Activated naive CD4-positive, alpha-beta T cell treated with anti-CD3 and anti-CD28 coated beads for 36 hours (primary cell): ENCODE measurements at regions of chr1 and their contacts with region 1.

Region 1: DNA sequence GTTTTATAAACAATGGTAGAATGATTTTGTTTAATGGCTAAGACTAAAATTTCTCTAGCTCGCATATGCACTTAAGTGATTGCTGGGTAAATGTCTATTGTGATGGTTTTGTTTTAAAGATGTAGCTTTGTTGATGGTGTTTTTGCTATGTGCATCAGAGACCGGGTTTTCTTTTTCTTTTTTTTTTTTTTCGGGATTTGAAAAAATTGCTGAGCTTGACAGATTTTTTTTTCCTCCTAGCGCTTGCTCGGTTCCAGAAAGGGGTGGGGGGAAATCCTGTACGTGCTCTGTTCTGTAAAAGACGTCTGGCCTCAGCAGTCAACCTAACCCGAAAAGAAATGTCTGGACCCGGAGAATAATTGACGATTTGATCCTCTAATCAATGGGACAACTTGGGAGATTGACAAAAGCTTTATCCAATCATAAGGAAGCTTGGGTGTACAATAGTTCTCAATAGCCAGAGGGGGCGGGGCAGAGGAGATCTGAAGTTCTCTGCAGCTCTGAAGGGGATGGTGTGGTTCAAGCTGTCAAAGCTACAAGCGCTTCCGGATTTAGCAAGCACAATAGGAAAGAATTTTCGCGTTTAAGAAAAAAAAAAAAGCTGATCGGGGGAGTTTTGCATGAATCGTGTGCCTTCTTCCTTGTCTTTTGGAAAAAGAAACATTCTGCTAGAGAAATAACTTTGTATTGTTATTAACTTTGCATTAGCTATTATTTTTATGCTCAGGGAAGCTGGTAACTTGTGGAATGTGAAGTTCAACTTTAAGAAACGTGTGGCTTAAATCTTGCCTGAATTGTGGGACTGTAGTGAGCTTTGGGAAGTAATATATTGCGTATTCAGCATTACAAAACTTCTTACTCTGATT is 4.5 kb upstream of the NFIA start:
- DNase-seq: peak; percentile 96
- H3K4me3 Mint-ChIP-seq: peak overlapping the region; percentile 92
- H3K27ac Mint-ChIP-seq: peak overlapping the region; percentile 75
- H3K4me1 Mint-ChIP-seq: peaks cover 43% of the 10 kb centered on the region
- H3K27me3 Mint-ChIP-seq: peaks cover 9% of the 10 kb centered on the region

Region 2: GRCh38 chr1:60978421-60979357 is 99.2 kb before region 1 on chr1:
- CTCF ChIA-PET with region 1: no interaction called
- intact Hi-C with region 1: no loop called
- DNase-seq: peak; percentile 57
- H3K4me3 Mint-ChIP-seq: no peak overlapping the region
- H3K27ac Mint-ChIP-seq: no peak overlapping the region
- H3K4me1 Mint-ChIP-seq: peaks cover 2% of the 10 kb centered on the region
- H3K27me3 Mint-ChIP-seq: no peaks in the 10 kb centered on the region

Region 3: DNA sequence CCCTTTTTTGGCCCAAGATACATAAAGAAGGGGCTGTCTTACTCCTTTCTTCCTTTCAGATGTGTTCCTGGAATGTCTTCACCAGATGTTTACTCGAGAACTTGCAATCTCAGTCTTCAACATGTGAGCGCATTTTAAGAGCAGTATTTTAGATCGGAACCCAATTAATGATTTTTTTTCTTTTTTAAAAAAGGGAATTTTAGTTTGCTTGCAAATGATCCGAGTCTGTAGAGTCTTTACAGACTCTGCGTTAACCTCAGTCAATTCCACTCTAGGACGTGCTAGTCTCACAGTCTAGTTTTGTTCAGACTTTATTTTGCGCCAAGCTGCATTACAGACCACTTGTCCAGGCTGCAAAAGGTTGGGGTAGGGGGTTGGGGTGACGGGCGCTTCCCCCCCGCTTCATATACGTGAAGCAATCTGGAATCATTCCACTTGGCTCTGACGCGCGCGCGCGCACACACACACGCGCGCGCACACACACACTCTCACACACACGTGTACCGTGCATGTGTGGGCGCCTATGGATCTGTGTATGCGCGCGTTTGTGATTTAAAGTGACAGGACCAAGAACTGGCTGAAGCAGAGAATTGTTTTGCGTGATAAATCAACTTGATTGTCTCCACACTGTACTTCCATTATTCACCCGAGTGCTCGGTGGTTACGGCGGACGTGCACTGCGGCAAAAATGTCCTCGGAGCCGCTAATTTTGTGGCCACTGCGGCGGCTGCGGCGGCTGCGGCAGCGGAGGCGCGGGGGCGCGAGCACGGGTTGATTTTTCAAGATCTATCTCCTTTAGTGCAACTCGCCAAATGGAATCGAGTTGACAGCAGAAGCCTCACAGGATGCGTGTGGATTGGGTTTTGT is 21.1 kb before region 1 on chr1:
- CTCF ChIA-PET with region 1: interaction called, 3 read pairs
- intact Hi-C with region 1: loop called (anchors 1 kb)
- DNase-seq: peak; percentile 35
- H3K4me3 Mint-ChIP-seq: peak overlapping the region; percentile 78
- H3K27ac Mint-ChIP-seq: no peak overlapping the region
- H3K4me1 Mint-ChIP-seq: peaks cover 25% of the 10 kb centered on the region
- H3K27me3 Mint-ChIP-seq: peaks cover 59% of the 10 kb centered on the region

Region 4: GRCh38 chr1:61301824-61302657 is 224.1 kb after region 1 on chr1:
- CTCF ChIA-PET with region 1: interaction called, 5 read pairs
- intact Hi-C with region 1: loop called (anchors 1 kb)
- DNase-seq: peak; percentile 60
- H3K4me3 Mint-ChIP-seq: no peak overlapping the region
- H3K27ac Mint-ChIP-seq: peak overlapping the region; percentile 65
- H3K4me1 Mint-ChIP-seq: peaks cover 19% of the 10 kb centered on the region
- H3K27me3 Mint-ChIP-seq: peaks cover 24% of the 10 kb centered on the region

Region 5: GRCh38 chr1:61724813-61725694 is 647.1 kb after region 1 on chr1 and contains the start of gene TM2D1:
- CTCF ChIA-PET with region 1: no interaction called
- intact Hi-C with region 1: loop called (anchors 1 kb)
- DNase-seq: peak; percentile 91
- H3K4me3 Mint-ChIP-seq: peak within 1 kb of the TSS; percentile 96
- H3K27ac Mint-ChIP-seq: peak within 1 kb of the TSS; percentile 99
- H3K4me1 Mint-ChIP-seq: peaks cover 20% of the 10 kb centered on the region
- H3K27me3 Mint-ChIP-seq: no peaks in the 10 kb centered on the region
- total RNA-seq, gene TM2D1: 28.2 to 30.9 TPM

Region 6: GRCh38 chr1:62436466-62437256 is 1358.8 kb after region 1 on chr1 and contains the start of gene USP1:
- CTCF ChIA-PET with region 1: no interaction called
- intact Hi-C with region 1: loop called (anchors 2 kb)
- DNase-seq: peak; percentile 99
- H3K4me3 Mint-ChIP-seq: peak within 1 kb of the TSS; percentile 82
- H3K27ac Mint-ChIP-seq: peak within 1 kb of the TSS; percentile 99
- H3K4me1 Mint-ChIP-seq: peaks cover 30% of the 10 kb centered on the region
- H3K27me3 Mint-ChIP-seq: no peaks in the 10 kb centered on the region
- total RNA-seq, gene USP1: 65.9 to 67.1 TPM